Right cardiac atrium (tissue), 5 donors: ENCODE measurements at regions of chr9 and their contacts with region 1.

Region 1: GRCh38 chr9:72533337-72533736 is 11.9 kb downstream of the TMC1 start:
- DNase-seq: no peak
- ATAC-seq: no peak
- H3K4me3 ChIP-seq: no peak overlapping the region
- H3K27ac ChIP-seq: no peak overlapping the region
- H3K4me1 ChIP-seq: no peaks in the 10 kb centered on the region
- H3K27me3 ChIP-seq: no peaks in the 10 kb centered on the region

Region 2: GRCh38 chr9:72140582-72140981 is 392.8 kb before region 1 on chr9:
- intact Hi-C with region 1: no loop called
- DNase-seq: no peak
- ATAC-seq: no peak
- H3K4me3 ChIP-seq: no peak overlapping the region
- H3K27ac ChIP-seq: no peak overlapping the region
- H3K4me1 ChIP-seq: no peaks in the 10 kb centered on the region
- H3K27me3 ChIP-seq: no peaks in the 10 kb centered on the region

Region 3: GRCh38 chr9:72315510-72316311 is 217.6 kb before region 1 on chr9:
- intact Hi-C with region 1: no loop called
- DNase-seq: peak in 1 of 3 donors; percentile 48
- ATAC-seq: peak; percentile 63 to 80
- H3K4me3 ChIP-seq: peak overlapping the region; percentile 14
- H3K27ac ChIP-seq: peak overlapping the region; percentile 42
- H3K4me1 ChIP-seq: peaks cover 4% of the 10 kb centered on the region
- H3K27me3 ChIP-seq: no peaks in the 10 kb centered on the region

Region 4: GRCh38 chr9:72577212-72577753 is 43.9 kb after region 1 on chr9:
- intact Hi-C with region 1: loop called in 1 of 4 experiments (anchors 5 kb)
- DNase-seq: peak in 1 of 3 donors; percentile 23
- ATAC-seq: peak; percentile 85 to 87
- H3K4me3 ChIP-seq: peak overlapping the region; percentile 7
- H3K27ac ChIP-seq: peak overlapping the region; percentile 87
- H3K4me1 ChIP-seq: peaks cover 2% of the 10 kb centered on the region
- H3K27me3 ChIP-seq: no peaks in the 10 kb centered on the region